PC-9 (cell line): ENCODE measurements at regions of chr18 and their contacts with region 1.

Region 1: GRCh38 chr18:48834413-48835031 is 116.2 kb downstream of the SMAD7 start:
- DNase-seq: peak; percentile 76 to 96
- H3K4me3 ChIP-seq: peak overlapping the region; percentile 40; the same call in 1 of the 2 replicates
- H3K27ac ChIP-seq: peak overlapping the region; percentile 78
- H3K4me1 ChIP-seq: peaks cover 71% of the 10 kb centered on the region
- H3K27me3 ChIP-seq: no peaks in the 10 kb centered on the region
- CTCF ChIP-seq: no peak

Region 2: GRCh38 chr18:48007955-48008701 is 826.4 kb before region 1 on chr18:
- CTCF ChIA-PET with region 1: interaction called, 10 read pairs
- POLR2A ChIA-PET with region 1: no interaction called
- intact Hi-C with region 1: no loop called
- DNase-seq: peak; percentile 55 to 65
- H3K4me3 ChIP-seq: peak overlapping the region; percentile 97
- H3K27ac ChIP-seq: no peak overlapping the region
- H3K4me1 ChIP-seq: peaks cover 29% of the 10 kb centered on the region
- H3K27me3 ChIP-seq: no peaks in the 10 kb centered on the region
- CTCF ChIP-seq: peak; percentile 53; the same call in 1 of the 2 replicates

Region 3: GRCh38 chr18:48790226-48790874 is 44.2 kb before region 1 on chr18:
- CTCF ChIA-PET with region 1: no interaction called
- POLR2A ChIA-PET with region 1: no interaction called
- intact Hi-C with region 1: no loop called
- DNase-seq: no peak
- H3K4me3 ChIP-seq: no peak overlapping the region
- H3K27ac ChIP-seq: no peak overlapping the region
- H3K4me1 ChIP-seq: no peaks in the 10 kb centered on the region
- H3K27me3 ChIP-seq: no peaks in the 10 kb centered on the region
- CTCF ChIP-seq: no peak

Region 4: GRCh38 chr18:48868468-48869466 is 34.2 kb after region 1 on chr18:
- CTCF ChIA-PET with region 1: interaction called, 3 read pairs
- POLR2A ChIA-PET with region 1: no interaction called
- intact Hi-C with region 1: loop called (anchors 1 kb)
- DNase-seq: no peak
- H3K4me3 ChIP-seq: no peak overlapping the region
- H3K27ac ChIP-seq: no peak overlapping the region
- H3K4me1 ChIP-seq: peaks cover 18% of the 10 kb centered on the region
- H3K27me3 ChIP-seq: no peaks in the 10 kb centered on the region
- CTCF ChIP-seq: no peak

Region 5: DNA sequence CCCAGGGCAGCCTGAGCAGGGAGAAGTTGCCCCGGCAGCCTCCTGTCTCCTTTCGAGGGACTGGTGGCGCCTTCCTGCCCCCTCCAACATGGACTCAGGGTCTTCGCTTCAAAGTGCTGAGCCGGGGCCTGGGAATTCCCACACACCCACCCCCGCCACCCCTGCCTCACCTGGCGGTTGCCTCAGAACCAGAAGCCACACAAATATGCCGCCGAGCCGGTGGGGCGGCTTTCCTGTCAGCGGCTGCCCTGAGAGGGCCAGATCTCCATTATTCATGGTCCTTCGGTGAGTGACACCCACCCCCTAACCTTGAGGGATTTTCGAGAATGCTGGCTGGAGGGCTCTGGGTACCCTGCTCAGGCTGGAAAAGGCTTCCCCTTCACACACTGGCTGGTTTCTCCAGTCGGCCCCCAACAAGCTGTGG is 44.5 kb after region 1 on chr18:
- CTCF ChIA-PET with region 1: no interaction called
- POLR2A ChIA-PET with region 1: no interaction called
- intact Hi-C with region 1: no loop called
- DNase-seq: peak; percentile 77 to 86
- H3K4me3 ChIP-seq: peak overlapping the region; percentile 51
- H3K27ac ChIP-seq: peak overlapping the region; percentile 94
- H3K4me1 ChIP-seq: peaks cover 42% of the 10 kb centered on the region
- H3K27me3 ChIP-seq: no peaks in the 10 kb centered on the region
- CTCF ChIP-seq: no peak

Region 6: DNA sequence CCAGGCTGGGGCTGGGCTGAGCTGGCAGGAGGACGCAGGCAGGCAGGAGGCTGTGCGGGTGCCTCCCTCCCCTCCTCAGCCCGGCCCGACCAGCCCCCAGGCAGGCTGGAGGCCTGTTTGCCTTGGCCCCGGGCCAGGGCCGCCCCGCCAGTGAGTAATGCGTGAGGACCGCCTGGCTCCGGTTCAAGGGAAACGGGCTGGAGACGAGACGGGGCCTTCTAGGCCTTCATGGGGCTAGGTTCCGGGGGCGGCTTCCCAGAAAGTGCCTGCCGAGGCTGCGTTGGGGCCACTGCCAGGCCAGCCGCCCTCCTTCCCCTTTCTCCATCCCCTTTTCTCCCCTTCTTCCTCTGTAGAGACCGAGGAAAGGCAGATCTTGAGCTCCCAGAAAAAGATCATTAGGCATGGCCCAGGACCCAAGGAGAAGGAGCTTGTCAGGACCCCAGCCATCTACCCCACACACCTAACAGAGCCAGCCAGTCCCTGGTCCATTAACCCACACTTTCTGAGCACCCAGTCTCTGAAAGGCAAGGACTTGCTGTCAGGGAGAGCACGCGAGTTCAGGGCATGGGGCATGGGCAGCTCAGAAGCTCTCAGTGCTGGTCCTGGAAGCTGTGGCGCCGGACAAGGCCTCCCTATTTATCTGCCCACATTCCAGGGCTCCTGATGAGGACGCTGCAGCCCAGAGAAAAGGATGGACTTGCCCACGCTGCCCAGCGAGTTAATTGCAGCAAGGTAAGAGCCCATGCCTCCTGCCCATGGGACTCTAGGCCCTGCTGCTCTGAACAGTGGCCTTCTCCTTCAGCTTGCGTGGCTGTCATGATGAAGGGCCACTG is 67.7 kb after region 1 on chr18:
- CTCF ChIA-PET with region 1: no interaction called
- POLR2A ChIA-PET with region 1: no interaction called
- intact Hi-C with region 1: loop called (anchors 2 kb)
- DNase-seq: peak; percentile 72 to 88
- H3K4me3 ChIP-seq: no peak overlapping the region
- H3K27ac ChIP-seq: no peak overlapping the region
- H3K4me1 ChIP-seq: peaks cover 38% of the 10 kb centered on the region
- H3K27me3 ChIP-seq: no peaks in the 10 kb centered on the region
- CTCF ChIP-seq: no peak